Cardiac septum (tissue), 1 donor: ENCODE measurements at regions of chr9 and their contacts with region 1.

Region 1: GRCh38 chr9:35096035-35096849 is at the start of gene PIGO:
- DNase-seq: peak; percentile 94
- total RNA-seq, gene PIGO: 9.3 TPM

Region 2: DNA sequence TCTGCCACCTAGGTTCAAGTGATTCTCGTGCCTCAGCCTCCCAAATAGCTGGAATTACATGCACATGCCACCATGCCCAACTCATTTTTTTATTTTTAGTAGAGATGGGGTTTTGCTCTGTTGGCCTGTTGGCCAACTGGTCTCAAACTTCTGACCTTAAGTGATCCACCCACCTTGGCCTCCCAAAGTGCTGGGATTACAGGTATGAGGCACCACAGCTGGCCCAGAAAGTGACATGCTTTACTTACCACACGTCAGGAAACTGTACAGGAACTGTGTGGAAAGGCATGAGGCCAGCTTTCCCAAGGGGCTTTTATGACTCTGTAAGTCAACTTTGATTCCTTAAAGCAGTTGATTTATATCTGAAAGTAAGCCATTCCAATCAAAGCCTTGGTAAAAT is 81.7 kb before region 1 on chr9:
- intact Hi-C with region 1: no loop called
- DNase-seq: no peak

Region 3: GRCh38 chr9:35079426-35080341 is 16.6 kb before region 1 on chr9 and contains the start of gene FANCG:
- intact Hi-C with region 1: loop called (anchors 2 kb)
- DNase-seq: peak; percentile 97
- total RNA-seq, gene FANCG: 5.6 TPM

Region 4: GRCh38 chr9:35237311-35237710 is 141.1 kb after region 1 on chr9:
- intact Hi-C with region 1: no loop called
- DNase-seq: no peak